H1 (cell line): ENCODE measurements at regions of chr7 and their contacts with region 1.

Region 1: GRCh38 chr7:67625257-67625737 is 628.7 kb downstream of the TYW1 start:
- DNase-seq: peak; percentile 83 to 87
- H3K4me3 ChIP-seq: peak overlapping the region in 3 of 4 experiments; percentile 23 to 53 (median 27); a peak in 5 of 8 replicates
- H3K27ac ChIP-seq: no peak overlapping the region
- H3K4me1 ChIP-seq: no peaks in the 10 kb centered on the region; a peak in 2 of 7 replicates
- H3K27me3 ChIP-seq: peaks cover 0 to 2% (median 0%) of the 10 kb centered on the region in 4 experiments; a peak in 2 of 7 replicates
- CTCF ChIP-seq: peak; percentile 83 to 90 (median 86)
- EP300 ChIP-seq: no peak
- POLR2A ChIP-seq: no peak
- RAD21 ChIP-seq: peak; percentile 96 to 99

Region 2: DNA sequence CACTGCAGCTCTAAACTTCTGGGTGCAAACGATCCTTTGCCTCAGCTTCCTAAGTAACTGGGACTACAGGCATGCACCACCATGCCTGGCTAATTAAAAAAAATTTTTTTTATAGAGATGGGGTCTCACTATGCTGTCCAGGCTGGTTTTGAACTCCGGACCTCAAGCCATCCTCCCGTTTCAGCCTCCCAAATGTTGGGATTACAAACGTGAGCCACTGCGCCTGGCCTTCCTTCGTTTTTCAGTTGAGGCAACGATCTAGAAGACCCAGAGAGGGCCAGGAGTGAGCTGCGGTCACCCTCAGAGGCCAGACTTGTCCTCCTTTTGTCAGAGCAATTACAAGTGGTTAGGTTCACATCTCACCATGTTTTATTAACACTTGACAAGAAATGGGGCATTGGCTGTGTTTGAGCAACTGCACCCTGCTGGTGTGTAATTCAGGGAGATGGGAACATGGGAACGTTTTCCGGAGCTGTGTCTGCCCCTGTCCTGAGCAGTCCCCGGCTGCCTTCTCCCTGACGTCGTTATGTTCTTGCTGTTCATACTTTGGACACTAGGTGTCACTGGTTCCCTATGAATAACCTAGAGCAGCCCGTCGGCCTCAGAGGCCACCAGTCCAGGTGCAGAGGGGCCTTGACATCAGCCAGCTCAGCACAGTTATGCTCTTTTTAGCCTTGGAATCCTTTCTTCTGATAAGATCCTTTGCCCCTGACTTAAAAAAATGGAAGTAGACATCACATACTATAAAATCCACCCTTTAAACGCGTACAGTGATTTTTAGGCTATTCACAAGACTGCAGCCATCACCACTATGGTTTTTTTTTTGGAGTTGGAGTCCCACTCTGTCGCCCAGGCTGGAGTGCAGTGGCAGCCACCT is 253.6 kb before region 1 on chr7:
- CTCF ChIA-PET with region 1: interaction called, 10 read pairs
- POLR2A ChIA-PET with region 1: no interaction called
- DNase-seq: peak; percentile 61 to 85
- H3K4me3 ChIP-seq: no peak overlapping the region
- H3K27ac ChIP-seq: no peak overlapping the region
- H3K4me1 ChIP-seq: no peaks in the 10 kb centered on the region
- H3K27me3 ChIP-seq: no peaks in the 10 kb centered on the region
- CTCF ChIP-seq: peak; percentile 73 to 86 (median 75)
- EP300 ChIP-seq: no peak
- POLR2A ChIP-seq: no peak
- RAD21 ChIP-seq: peak; percentile 94 to 96

Region 3: DNA sequence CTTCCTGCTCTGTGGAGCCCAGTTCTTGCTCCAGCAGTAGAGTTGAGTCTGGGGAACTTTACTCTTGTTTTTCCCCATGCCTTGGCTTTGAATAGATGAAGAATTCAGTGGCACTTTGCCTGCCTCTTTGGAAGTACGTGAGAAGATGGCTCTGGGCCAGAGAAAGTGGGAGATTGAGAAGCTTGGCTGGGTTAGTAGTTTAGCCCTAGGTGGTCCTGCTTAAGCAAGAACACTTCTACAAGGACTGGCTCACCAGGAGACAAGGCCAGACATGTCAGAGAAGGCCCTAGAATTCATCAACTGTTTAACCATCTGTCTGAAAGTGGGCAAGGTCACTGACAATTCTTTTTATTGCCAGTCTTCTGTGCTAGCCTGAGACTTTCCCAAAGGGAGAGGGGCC is 218.3 kb before region 1 on chr7:
- CTCF ChIA-PET with region 1: no interaction called
- POLR2A ChIA-PET with region 1: no interaction called
- DNase-seq: no peak
- H3K4me3 ChIP-seq: no peak overlapping the region
- H3K27ac ChIP-seq: no peak overlapping the region
- H3K4me1 ChIP-seq: no peaks in the 10 kb centered on the region
- H3K27me3 ChIP-seq: no peaks in the 10 kb centered on the region; a peak in 1 of 7 replicates
- CTCF ChIP-seq: no peak
- EP300 ChIP-seq: no peak
- POLR2A ChIP-seq: no peak
- RAD21 ChIP-seq: no peak

Region 4: GRCh38 chr7:67593794-67594193 is 31.5 kb before region 1 on chr7:
- CTCF ChIA-PET with region 1: no interaction called
- POLR2A ChIA-PET with region 1: no interaction called
- DNase-seq: no peak
- H3K4me3 ChIP-seq: no peak overlapping the region
- H3K27ac ChIP-seq: no peak overlapping the region
- H3K4me1 ChIP-seq: peaks cover 0 to 5% (median 0%) of the 10 kb centered on the region in 4 experiments; a peak in 2 of 7 replicates
- H3K27me3 ChIP-seq: no peaks in the 10 kb centered on the region
- CTCF ChIP-seq: no peak
- EP300 ChIP-seq: no peak
- POLR2A ChIP-seq: no peak
- RAD21 ChIP-seq: no peak

Region 5: DNA sequence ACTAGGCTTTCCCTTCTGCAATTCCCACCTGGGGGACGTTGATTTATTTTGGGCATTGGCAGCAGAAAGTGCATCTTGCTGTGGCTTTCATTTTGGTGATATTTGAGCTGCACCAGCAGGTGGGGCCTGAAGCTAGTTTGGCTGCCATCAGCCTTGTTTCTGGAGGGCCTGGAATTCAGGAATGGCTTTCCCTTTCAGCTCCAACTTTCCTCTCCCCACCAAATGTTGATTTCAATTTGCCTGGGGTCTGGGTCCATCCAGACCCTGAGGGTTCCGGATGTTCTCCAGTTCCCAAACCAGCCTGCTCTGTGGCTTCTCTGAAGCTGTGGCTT is 11.7 kb after region 1 on chr7:
- CTCF ChIA-PET with region 1: interaction called, 18 read pairs
- POLR2A ChIA-PET with region 1: no interaction called
- DNase-seq: no peak
- H3K4me3 ChIP-seq: 0 out of 8 replicates have a peak overlapping the region, but pooled peaks of 1 of the 4 experiments have one; percentile 16
- H3K27ac ChIP-seq: no peak overlapping the region
- H3K4me1 ChIP-seq: no peaks in the 10 kb centered on the region
- H3K27me3 ChIP-seq: no peaks in the 10 kb centered on the region
- CTCF ChIP-seq: peak; percentile 33 to 44 (median 39)
- EP300 ChIP-seq: no peak
- POLR2A ChIP-seq: no peak
- RAD21 ChIP-seq: peak; percentile 62 to 70

Region 6: GRCh38 chr7:67738958-67739357 is 113.7 kb after region 1 on chr7:
- CTCF ChIA-PET with region 1: no interaction called
- POLR2A ChIA-PET with region 1: no interaction called
- DNase-seq: no peak
- H3K4me3 ChIP-seq: no peak overlapping the region
- H3K27ac ChIP-seq: no peak overlapping the region
- H3K4me1 ChIP-seq: no peaks in the 10 kb centered on the region
- H3K27me3 ChIP-seq: no peaks in the 10 kb centered on the region
- CTCF ChIP-seq: no peak
- EP300 ChIP-seq: no peak
- POLR2A ChIP-seq: no peak
- RAD21 ChIP-seq: no peak